Caco-2 (cell line): ENCODE measurements at regions of chr16 and their contacts with region 1.

Region 1: DNA sequence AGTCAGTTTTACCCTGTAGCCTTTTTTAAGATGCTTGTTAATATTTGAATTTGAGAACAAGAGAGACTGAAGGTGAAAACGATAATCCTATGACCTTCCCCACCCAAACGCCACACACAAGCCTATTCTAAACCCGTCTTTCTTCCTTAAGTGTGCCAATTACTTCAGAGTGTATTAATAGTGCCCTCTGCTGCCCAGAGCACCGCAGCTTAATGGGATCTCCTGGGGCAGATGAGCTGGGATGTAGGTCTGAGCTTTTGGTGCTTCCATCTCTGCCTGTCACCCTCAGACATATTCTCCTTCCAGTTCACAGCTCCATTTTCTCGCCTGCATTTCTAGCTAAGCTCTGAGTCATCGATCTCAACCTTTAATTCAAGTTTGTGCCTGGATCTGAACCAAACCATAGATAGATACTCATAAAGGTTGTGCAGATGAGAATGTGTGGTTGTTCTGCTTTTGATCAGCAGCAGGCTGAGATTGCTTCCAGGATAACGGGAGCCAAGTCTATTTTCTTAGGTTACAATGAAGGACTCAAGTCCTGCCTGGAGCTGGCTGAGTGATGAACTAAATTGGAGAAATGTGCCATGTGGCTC is 46.4 kb upstream of the CDH13 start:
- DNase-seq: peak in 1 of 2 experiments; percentile 53
- H3K4me3 ChIP-seq: no peak overlapping the region
- H3K4me3 Mint-ChIP-seq: peak overlapping the region; percentile 17
- H3K27ac Mint-ChIP-seq: no peak overlapping the region
- H3K4me1 ChIP-seq: peaks cover 16% of the 10 kb centered on the region
- H3K4me1 Mint-ChIP-seq: peaks cover 14% of the 10 kb centered on the region
- H3K27me3 ChIP-seq: no peaks in the 10 kb centered on the region
- H3K27me3 Mint-ChIP-seq: no peaks in the 10 kb centered on the region
- CTCF ChIP-seq: peak; percentile 46 to 56

Region 2: DNA sequence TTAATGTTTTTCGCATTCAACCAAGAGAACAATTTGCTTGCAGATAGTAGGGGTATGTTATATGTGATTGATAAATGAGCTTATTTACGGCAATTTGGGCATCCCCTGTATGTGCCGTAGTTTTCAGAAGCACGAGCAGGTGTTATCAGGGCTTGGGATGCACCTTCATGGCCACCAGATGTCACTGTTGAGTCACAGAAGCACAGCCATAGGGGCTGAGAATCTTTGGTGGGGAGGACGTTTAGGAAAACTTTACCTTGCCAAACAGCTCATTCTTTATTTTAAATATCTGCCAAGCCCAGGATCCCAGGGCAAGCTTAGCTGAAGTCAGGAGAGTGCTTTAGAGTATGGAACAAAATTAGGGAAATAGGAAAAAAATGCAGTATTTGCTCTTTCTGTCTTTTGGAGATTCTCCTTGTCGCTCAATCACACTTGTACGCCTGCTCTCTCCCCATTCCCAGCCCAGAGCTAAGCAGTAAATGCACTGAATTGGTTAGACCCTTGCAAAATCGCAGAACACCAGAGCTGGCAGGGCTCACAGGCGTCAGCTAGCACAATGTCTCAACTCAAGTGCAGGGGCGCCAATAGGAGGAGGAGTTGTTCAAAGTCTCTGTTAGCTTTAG is 316.8 kb before region 1 on chr16:
- CTCF ChIA-PET with region 1: interaction called, 20 read pairs
- POLR2A ChIA-PET with region 1: no interaction called
- intact Hi-C with region 1: loop called (anchors 1 kb)
- DNase-seq: peak; percentile 61 to 73
- H3K4me3 ChIP-seq: no peak overlapping the region
- H3K4me3 Mint-ChIP-seq: no peak overlapping the region
- H3K27ac Mint-ChIP-seq: no peak overlapping the region
- H3K4me1 ChIP-seq: 0 out of 2 replicates have a peak, but pooled peaks cover 3% of the 10 kb centered on the region
- H3K4me1 Mint-ChIP-seq: peaks cover 4% of the 10 kb centered on the region
- H3K27me3 ChIP-seq: no peaks in the 10 kb centered on the region
- H3K27me3 Mint-ChIP-seq: peaks cover 22% of the 10 kb centered on the region
- CTCF ChIP-seq: peak; percentile 96

Region 3: DNA sequence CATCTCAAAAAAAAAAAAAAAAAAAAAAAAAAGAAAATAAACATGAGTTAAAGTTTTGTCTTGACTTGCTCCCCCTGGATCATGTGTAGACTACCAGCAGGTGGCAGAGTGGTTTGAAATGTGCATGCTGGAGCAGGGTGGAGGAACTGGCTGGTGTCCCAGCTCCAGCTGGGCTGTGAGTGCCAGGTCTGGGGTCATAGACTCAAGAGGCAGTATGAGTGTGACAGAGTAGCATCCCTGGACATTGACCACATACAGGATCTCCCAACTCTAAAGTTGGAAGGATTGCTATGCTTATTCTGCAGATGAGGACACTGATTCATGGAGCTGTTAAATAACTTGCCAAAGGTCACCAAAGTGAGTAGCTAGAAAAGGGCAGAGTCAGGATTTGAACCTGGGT is 212.4 kb before region 1 on chr16:
- CTCF ChIA-PET with region 1: interaction called, 3 read pairs
- POLR2A ChIA-PET with region 1: no interaction called
- intact Hi-C with region 1: loop called (anchors 1 kb)
- DNase-seq: peak; percentile 62
- H3K4me3 ChIP-seq: no peak overlapping the region
- H3K4me3 Mint-ChIP-seq: no peak overlapping the region
- H3K27ac Mint-ChIP-seq: no peak overlapping the region
- H3K4me1 ChIP-seq: no peaks in the 10 kb centered on the region
- H3K4me1 Mint-ChIP-seq: no peaks in the 10 kb centered on the region
- H3K27me3 ChIP-seq: no peaks in the 10 kb centered on the region; the same call in 1 of the 2 replicates
- H3K27me3 Mint-ChIP-seq: peaks cover 20% of the 10 kb centered on the region
- CTCF ChIP-seq: peak; percentile 46 to 63

Region 4: DNA sequence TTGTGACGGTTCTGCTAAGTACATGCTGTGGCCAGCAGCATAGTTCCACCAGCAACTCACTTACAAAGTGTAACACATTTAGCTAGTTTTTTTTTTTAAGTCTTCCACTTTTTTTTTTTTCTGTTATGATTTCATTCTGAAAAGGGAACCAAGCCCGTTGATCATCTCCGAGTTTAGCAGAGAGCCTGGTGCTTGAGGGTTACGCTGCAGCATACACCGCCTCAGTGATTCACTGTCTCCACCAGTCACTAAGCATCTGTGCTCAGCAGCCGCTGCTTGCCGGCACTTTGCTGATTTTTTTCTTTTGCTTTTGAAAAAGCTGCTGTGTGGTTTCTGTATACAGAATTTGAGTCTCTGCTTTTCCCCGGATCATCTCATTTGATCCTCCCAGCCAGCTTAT is 148.1 kb before region 1 on chr16:
- CTCF ChIA-PET with region 1: no interaction called
- POLR2A ChIA-PET with region 1: no interaction called
- intact Hi-C with region 1: loop called (anchors 1 kb)
- DNase-seq: no peak
- H3K4me3 ChIP-seq: no peak overlapping the region
- H3K4me3 Mint-ChIP-seq: no peak overlapping the region
- H3K27ac Mint-ChIP-seq: no peak overlapping the region
- H3K4me1 ChIP-seq: no peaks in the 10 kb centered on the region
- H3K4me1 Mint-ChIP-seq: no peaks in the 10 kb centered on the region
- H3K27me3 ChIP-seq: no peaks in the 10 kb centered on the region; the same call in 1 of the 2 replicates
- H3K27me3 Mint-ChIP-seq: peaks cover 34% of the 10 kb centered on the region
- CTCF ChIP-seq: no peak

Region 5: GRCh38 chr16:82470620-82471152 is 109.7 kb before region 1 on chr16:
- CTCF ChIA-PET with region 1: no interaction called
- POLR2A ChIA-PET with region 1: no interaction called
- intact Hi-C with region 1: loop called (anchors 2 kb)
- DNase-seq: peak; percentile 72 to 77
- H3K4me3 ChIP-seq: no peak overlapping the region
- H3K4me3 Mint-ChIP-seq: peak overlapping the region; percentile 41
- H3K27ac Mint-ChIP-seq: peak overlapping the region; percentile 89
- H3K4me1 ChIP-seq: peaks cover 7% of the 10 kb centered on the region; the same call in 1 of the 2 replicates
- H3K4me1 Mint-ChIP-seq: peaks cover 12% of the 10 kb centered on the region
- H3K27me3 ChIP-seq: no peaks in the 10 kb centered on the region
- H3K27me3 Mint-ChIP-seq: peaks cover 19% of the 10 kb centered on the region
- CTCF ChIP-seq: no peak

Region 6: GRCh38 chr16:82522026-82522425 is 58.4 kb before region 1 on chr16:
- CTCF ChIA-PET with region 1: no interaction called
- POLR2A ChIA-PET with region 1: no interaction called
- intact Hi-C with region 1: no loop called
- DNase-seq: no peak
- H3K4me3 ChIP-seq: no peak overlapping the region
- H3K4me3 Mint-ChIP-seq: no peak overlapping the region
- H3K27ac Mint-ChIP-seq: no peak overlapping the region
- H3K4me1 ChIP-seq: no peaks in the 10 kb centered on the region
- H3K4me1 Mint-ChIP-seq: peaks cover 6% of the 10 kb centered on the region
- H3K27me3 ChIP-seq: no peaks in the 10 kb centered on the region
- H3K27me3 Mint-ChIP-seq: no peaks in the 10 kb centered on the region
- CTCF ChIP-seq: no peak

Region 7: GRCh38 chr16:82533189-82533588 is 47.2 kb before region 1 on chr16:
- CTCF ChIA-PET with region 1: no interaction called
- POLR2A ChIA-PET with region 1: no interaction called
- intact Hi-C with region 1: no loop called
- DNase-seq: no peak
- H3K4me3 ChIP-seq: no peak overlapping the region
- H3K4me3 Mint-ChIP-seq: no peak overlapping the region
- H3K27ac Mint-ChIP-seq: no peak overlapping the region
- H3K4me1 ChIP-seq: no peaks in the 10 kb centered on the region
- H3K4me1 Mint-ChIP-seq: no peaks in the 10 kb centered on the region
- H3K27me3 ChIP-seq: no peaks in the 10 kb centered on the region; the same call in 1 of the 2 replicates
- H3K27me3 Mint-ChIP-seq: peaks cover 3% of the 10 kb centered on the region
- CTCF ChIP-seq: no peak